MCF 10A (cell line): ENCODE measurements at regions of chr14 and their contacts with region 1.

Region 1: DNA sequence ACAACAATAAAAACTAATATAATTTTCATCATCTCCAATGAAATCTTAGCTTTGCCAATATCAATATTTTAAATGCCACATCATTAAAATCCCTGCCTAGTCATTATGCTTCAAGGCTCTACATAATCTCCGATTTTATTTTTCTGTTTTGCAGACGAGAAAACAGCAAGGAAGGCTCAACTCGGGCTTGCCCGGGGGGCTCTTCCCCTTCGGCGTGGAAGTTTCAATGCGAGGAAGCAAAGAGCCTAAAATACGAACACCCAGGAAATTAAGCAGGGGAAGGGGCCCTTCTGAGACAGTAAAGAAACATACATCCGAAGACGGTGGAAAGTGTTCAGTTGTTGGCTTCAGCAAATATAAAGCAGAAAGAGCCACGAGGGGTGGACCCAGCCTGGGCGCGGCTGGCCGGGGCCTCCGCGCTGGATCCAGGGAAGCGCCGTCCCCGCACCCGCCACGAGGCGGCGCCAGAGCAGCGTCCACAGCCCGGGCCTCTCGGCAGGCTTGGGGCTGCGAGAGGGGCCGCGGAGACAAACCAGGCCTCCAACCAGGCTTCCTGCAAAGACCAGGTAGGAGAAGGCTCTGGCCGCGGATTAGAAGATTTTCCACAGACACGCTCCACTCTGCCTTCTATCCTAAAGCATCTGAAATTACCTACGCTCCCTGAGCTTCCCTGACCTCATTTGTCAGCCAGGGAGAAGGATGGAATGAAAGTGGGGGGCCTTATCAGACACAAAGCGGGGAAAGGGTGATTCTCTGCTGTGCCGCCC is 77.2 kb downstream of the SERPINA3 start:
- DNase-seq: peak; percentile 50
- H3K4me3 Mint-ChIP-seq: no peak overlapping the region
- H3K27ac Mint-ChIP-seq: no peak overlapping the region
- H3K4me1 Mint-ChIP-seq: no peaks in the 10 kb centered on the region
- H3K27me3 Mint-ChIP-seq: no peaks in the 10 kb centered on the region
- CTCF ChIP-seq: peak; percentile 96

Region 2: GRCh38 chr14:94702629-94703028 is 13.2 kb after region 1 on chr14:
- CTCF ChIA-PET with region 1: interaction called, 13 read pairs
- POLR2A ChIA-PET with region 1: no interaction called
- intact Hi-C with region 1: no loop called
- DNase-seq: peak; percentile 27
- H3K4me3 Mint-ChIP-seq: no peak overlapping the region
- H3K27ac Mint-ChIP-seq: no peak overlapping the region
- H3K4me1 Mint-ChIP-seq: no peaks in the 10 kb centered on the region
- H3K27me3 Mint-ChIP-seq: peaks cover 20% of the 10 kb centered on the region
- CTCF ChIP-seq: no peak

Region 3: GRCh38 chr14:94748667-94749347 is 59.4 kb after region 1 on chr14:
- CTCF ChIA-PET with region 1: interaction called, 7 read pairs
- POLR2A ChIA-PET with region 1: no interaction called
- intact Hi-C with region 1: loop called (anchors 2 kb)
- DNase-seq: peak; percentile 56
- H3K4me3 Mint-ChIP-seq: no peak overlapping the region
- H3K27ac Mint-ChIP-seq: no peak overlapping the region
- H3K4me1 Mint-ChIP-seq: no peaks in the 10 kb centered on the region
- H3K27me3 Mint-ChIP-seq: peaks cover 16% of the 10 kb centered on the region
- CTCF ChIP-seq: peak; percentile 38

Region 4: DNA sequence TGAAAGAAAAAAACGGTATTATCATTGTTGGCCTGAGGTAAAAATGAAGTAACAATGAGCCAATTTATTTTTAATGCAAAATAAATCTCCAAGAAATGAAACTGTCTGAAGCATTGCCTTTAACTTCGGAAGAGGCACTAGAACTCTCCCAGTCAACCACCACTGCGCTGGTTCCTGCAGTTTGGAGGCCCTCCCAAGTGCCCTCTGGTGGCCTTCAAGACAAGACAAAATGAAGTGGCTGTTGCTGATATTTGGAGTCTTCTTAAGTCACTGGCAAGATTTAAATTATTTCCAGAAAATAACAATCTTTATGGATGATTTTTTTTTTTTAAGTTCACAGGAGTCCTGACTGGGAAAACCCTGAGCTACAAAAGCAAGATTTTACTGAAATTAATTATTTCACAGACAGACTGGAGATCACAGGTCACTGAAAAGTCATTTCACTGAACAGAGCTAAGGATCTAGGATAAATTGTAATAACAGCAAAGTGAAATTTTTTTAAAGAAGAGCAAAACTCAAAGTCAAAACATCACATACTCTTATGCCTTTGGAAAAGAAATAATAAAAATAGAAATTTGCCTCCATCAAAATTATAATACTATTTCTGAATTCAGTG is 409.7 kb after region 1 on chr14:
- CTCF ChIA-PET with region 1: interaction called, 31 read pairs
- POLR2A ChIA-PET with region 1: interaction called, 6 read pairs
- intact Hi-C with region 1: loop called (anchors 1 kb)
- DNase-seq: peak; percentile 77
- H3K4me3 Mint-ChIP-seq: no peak overlapping the region
- H3K27ac Mint-ChIP-seq: no peak overlapping the region
- H3K4me1 Mint-ChIP-seq: peaks cover 12% of the 10 kb centered on the region
- H3K27me3 Mint-ChIP-seq: no peaks in the 10 kb centered on the region
- CTCF ChIP-seq: peak; percentile 60

Region 5: GRCh38 chr14:95106971-95107370 is 417.6 kb after region 1 on chr14:
- CTCF ChIA-PET with region 1: interaction called, 31 read pairs
- POLR2A ChIA-PET with region 1: interaction called, 3 read pairs
- intact Hi-C with region 1: no loop called
- DNase-seq: no peak
- H3K4me3 Mint-ChIP-seq: no peak overlapping the region
- H3K27ac Mint-ChIP-seq: no peak overlapping the region
- H3K4me1 Mint-ChIP-seq: peaks cover 6% of the 10 kb centered on the region
- H3K27me3 Mint-ChIP-seq: no peaks in the 10 kb centered on the region
- CTCF ChIP-seq: no peak

Region 6: GRCh38 chr14:95425369-95426115 is 736.1 kb after region 1 on chr14:
- CTCF ChIA-PET with region 1: interaction called, 10 read pairs
- POLR2A ChIA-PET with region 1: no interaction called
- intact Hi-C with region 1: no loop called
- DNase-seq: no peak
- H3K4me3 Mint-ChIP-seq: no peak overlapping the region
- H3K27ac Mint-ChIP-seq: no peak overlapping the region
- H3K4me1 Mint-ChIP-seq: peaks cover 6% of the 10 kb centered on the region
- H3K27me3 Mint-ChIP-seq: no peaks in the 10 kb centered on the region
- CTCF ChIP-seq: no peak

Region 7: DNA sequence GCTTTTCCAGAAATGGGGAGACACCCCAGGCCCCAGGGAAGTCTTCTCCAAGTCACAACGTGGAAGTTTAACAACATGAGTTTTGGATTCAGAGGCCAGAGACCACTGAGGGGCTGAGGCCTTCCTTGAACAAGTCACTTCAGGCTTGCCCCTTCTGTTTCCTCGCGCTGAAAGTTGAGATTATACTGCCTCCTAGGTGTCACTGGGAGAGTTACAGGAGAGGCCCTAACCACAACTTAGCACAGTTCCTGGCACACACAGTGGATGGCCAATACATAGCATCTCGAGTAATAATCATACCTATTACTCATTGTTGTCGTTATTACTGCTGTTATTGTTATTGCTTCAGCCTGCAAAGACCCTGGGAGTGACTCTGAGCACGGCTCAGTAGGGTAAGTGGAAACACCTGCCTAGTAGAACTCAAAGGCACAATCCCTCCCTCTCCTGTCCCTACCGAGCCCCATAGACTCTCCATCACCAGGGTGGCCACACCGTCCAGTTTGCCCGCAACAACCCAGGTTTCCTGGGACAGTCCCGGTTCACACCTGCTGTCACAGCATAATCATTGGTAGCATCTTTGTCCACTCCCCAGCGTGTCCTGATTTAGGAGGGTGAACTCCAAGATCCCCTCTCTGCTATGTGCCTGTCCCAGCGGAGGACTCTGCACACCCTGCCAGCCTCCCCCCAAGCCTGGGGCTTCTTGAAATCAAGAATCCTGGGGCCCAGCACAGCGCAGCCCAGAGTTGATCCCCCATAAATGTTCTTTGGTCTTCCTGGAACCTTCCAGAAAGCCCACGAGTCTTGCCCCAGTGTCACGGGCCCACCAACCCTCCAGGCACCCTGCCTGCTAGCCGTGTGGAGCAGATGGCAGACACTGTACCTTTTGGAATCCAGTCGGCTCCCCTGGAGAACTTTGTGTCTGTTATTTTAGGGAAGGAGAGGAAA is 742.1 kb after region 1 on chr14:
- CTCF ChIA-PET with region 1: interaction called, 40 read pairs
- POLR2A ChIA-PET with region 1: no interaction called
- intact Hi-C with region 1: loop called (anchors 1 kb)
- DNase-seq: peak; percentile 48
- H3K4me3 Mint-ChIP-seq: no peak overlapping the region
- H3K27ac Mint-ChIP-seq: peak overlapping the region; percentile 63
- H3K4me1 Mint-ChIP-seq: peaks cover 6% of the 10 kb centered on the region
- H3K27me3 Mint-ChIP-seq: no peaks in the 10 kb centered on the region
- CTCF ChIP-seq: peak; percentile 46